Body of pancreas (tissue), 4 donors: ENCODE measurements at regions of chr12 and their contacts with region 1.

Region 1: GRCh38 chr12:132614861-132615578 is 3.6 kb upstream of the P2RX2 start:
- DNase-seq: peak; percentile 81 to 84 (median 82)
- ATAC-seq: peak; percentile 88
- H3K4me3 ChIP-seq: no peak overlapping the region
- H3K27ac ChIP-seq: no peak overlapping the region
- H3K4me1 ChIP-seq: peaks cover 4% of the 10 kb centered on the region
- H3K27me3 ChIP-seq: peaks cover 0 to 27% of the 10 kb centered on the region in 2 donors
- CTCF ChIP-seq: peak; percentile 55 to 88 (median 81)
- POLR2A ChIP-seq: no peak

Region 2: DNA sequence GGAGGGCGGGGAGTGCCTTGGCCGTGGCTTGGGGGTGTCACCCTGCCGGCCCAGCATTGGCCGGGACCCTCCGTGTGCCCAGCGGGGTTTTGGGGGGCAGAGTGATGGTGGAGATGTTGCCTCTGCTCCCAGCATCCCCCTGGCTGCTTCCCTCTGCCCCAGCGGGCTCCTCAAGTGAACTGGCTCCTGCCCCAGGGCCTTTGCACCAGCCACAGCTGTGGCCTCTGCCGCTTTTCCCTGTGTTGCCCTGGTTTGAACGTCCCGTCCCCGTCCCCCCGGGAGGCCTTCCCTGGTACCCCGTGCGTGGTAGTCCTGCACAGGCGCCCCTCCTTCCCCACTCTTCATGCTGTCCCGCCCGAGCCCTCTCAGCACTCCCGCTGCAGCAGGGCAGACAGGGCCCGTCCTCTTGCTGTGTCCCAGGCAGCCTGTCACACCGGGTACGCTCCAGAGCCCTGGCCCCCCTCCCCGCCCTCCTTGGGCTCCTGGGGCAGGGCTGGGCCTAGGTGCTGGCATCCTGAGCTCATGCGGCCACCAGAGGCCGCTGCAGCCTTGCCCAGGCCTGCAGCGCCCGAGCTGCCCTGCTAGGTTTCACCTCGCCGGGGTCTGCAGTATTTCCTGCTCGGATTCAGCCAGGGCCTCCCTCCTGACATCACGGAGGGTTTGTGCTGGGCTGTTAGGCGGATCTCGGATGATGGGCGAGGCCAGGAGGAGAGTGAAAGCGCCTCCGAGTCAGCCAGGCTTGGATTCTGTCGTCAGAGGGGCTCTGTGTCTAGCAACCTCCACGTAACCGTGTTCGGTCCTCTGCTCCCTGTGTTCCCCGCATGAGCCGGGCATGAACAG is 461.3 kb before region 1 on chr12:
- intact Hi-C with region 1: loop called (anchors 10 kb)
- DNase-seq: peak; percentile 64 to 77 (median 66)
- ATAC-seq: peak; percentile 90
- H3K4me3 ChIP-seq: no peak overlapping the region
- H3K27ac ChIP-seq: no peak overlapping the region
- H3K4me1 ChIP-seq: peaks cover 8% of the 10 kb centered on the region
- H3K27me3 ChIP-seq: no peaks in the 10 kb centered on the region
- CTCF ChIP-seq: peak; percentile 77 to 90 (median 84)
- POLR2A ChIP-seq: peak in 1 of 3 donors; percentile 7

Region 3: GRCh38 chr12:132414634-132415326 is 200.2 kb before region 1 on chr12:
- intact Hi-C with region 1: loop called (anchors 5 kb)
- DNase-seq: peak; percentile 89 to 93 (median 92)
- ATAC-seq: peak; percentile 99
- H3K4me3 ChIP-seq: no peak overlapping the region
- H3K27ac ChIP-seq: no peak overlapping the region
- H3K4me1 ChIP-seq: peaks cover 13% of the 10 kb centered on the region
- H3K27me3 ChIP-seq: peaks cover 0 to 8% of the 10 kb centered on the region in 2 donors
- CTCF ChIP-seq: peak; percentile 93 to 99 (median 95)
- POLR2A ChIP-seq: no peak